ENCODE measurements at regions of chr7 and their contacts with region 1.

Region 1: DNA sequence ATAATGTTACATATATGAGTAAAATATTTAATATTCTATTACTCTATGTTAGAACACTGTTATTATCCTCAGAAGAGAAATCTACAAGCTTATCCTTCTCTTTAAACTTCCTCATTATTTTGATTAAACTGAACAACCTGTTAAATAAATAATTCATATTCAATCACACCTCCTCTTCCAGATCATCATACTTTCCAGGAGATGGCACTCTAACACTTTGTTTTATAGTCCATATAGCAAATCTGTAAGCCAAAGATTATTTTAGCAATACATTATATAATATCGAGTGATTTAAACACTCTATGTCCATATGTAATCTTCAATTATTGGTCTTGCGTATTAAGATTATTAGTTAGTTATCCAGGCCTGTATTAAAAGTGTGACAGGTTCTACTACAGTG is 694.1 kb downstream of the ANKRD7 start:
- DNase-seq: peak; percentile 5
- ATAC-seq: no peak
- H3K4me3 ChIP-seq: no peak overlapping the region
- H3K27ac ChIP-seq: no peak overlapping the region
- H3K4me1 ChIP-seq: no peaks in the 10 kb centered on the region
- H3K27me3 ChIP-seq: no peaks in the 10 kb centered on the region
- CTCF ChIP-seq: peak; percentile 46
- POLR2A ChIP-seq: no peak
- RAD21 ChIP-seq: 0 out of 2 replicates have a peak, but pooled peaks have one; percentile 14

Region 2: DNA sequence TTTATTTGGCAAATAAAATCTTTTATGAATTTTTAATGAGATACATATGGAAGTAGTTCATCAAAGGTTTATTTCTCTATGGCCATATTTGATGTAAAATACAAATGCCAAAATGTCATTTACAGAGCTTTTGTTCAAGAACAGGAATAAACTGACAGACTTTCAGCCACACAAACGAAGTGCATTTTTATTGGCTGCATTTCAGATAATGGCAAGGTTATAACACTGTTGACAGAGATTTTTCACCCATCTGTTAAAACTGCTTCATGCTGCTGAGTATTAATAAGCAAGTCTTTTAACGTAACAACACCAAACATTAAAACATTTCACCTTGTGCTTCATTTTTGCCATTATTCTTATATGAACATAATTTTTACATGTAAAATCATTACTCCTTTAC is 439.6 kb before region 1 on chr7:
- CTCF ChIA-PET with region 1: no interaction called
- POLR2A ChIA-PET with region 1: no interaction called
- dilution Hi-C with region 1: no loop called
- in situ Hi-C with region 1: no loop called
- intact Hi-C with region 1: no loop called
- DNase-seq: no peak
- ATAC-seq: no peak
- H3K4me3 ChIP-seq: no peak overlapping the region
- H3K27ac ChIP-seq: no peak overlapping the region
- H3K4me1 ChIP-seq: no peaks in the 10 kb centered on the region
- H3K27me3 ChIP-seq: no peaks in the 10 kb centered on the region
- CTCF ChIP-seq: no peak
- POLR2A ChIP-seq: no peak
- RAD21 ChIP-seq: no peak

Region 3: DNA sequence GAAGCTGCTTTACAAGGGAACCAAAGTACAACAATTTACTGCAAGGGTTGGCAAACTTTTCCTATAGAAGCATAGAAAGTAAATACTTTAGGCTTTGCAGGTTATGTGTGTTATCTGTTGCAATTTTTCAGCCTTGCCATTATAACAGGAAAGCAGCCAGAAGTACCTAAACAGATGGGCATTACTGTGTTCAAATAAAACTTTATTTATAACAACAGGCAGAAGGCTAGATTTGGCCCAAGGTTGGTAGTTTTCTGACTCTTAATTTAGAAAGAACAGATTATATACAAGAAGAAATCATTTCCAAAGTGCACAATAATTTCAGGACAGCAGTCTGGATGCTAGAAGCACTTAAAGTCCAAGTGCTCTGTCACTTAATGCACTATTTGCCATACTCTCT is 387.0 kb before region 1 on chr7:
- CTCF ChIA-PET with region 1: no interaction called
- POLR2A ChIA-PET with region 1: no interaction called
- dilution Hi-C with region 1: no loop called
- in situ Hi-C with region 1: no loop called
- intact Hi-C with region 1: no loop called
- DNase-seq: no peak
- ATAC-seq: no peak
- H3K4me3 ChIP-seq: no peak overlapping the region
- H3K27ac ChIP-seq: no peak overlapping the region
- H3K4me1 ChIP-seq: no peaks in the 10 kb centered on the region
- H3K27me3 ChIP-seq: no peaks in the 10 kb centered on the region
- CTCF ChIP-seq: no peak
- POLR2A ChIP-seq: no peak
- RAD21 ChIP-seq: no peak

Region 4: GRCh38 chr7:119175911-119176627 is 257.5 kb after region 1 on chr7:
- CTCF ChIA-PET with region 1: interaction called, 7 read pairs
- POLR2A ChIA-PET with region 1: no interaction called
- dilution Hi-C with region 1: no loop called
- in situ Hi-C with region 1: no loop called
- intact Hi-C with region 1: loop called (anchors 1 kb)
- DNase-seq: peak; percentile 42
- ATAC-seq: no peak
- H3K4me3 ChIP-seq: no peak overlapping the region
- H3K27ac ChIP-seq: no peak overlapping the region
- H3K4me1 ChIP-seq: no peaks in the 10 kb centered on the region
- H3K27me3 ChIP-seq: no peaks in the 10 kb centered on the region
- CTCF ChIP-seq: peak; percentile 52
- POLR2A ChIP-seq: no peak
- RAD21 ChIP-seq: peak; percentile 43; the same call in 1 of the 2 replicates

Region 5: DNA sequence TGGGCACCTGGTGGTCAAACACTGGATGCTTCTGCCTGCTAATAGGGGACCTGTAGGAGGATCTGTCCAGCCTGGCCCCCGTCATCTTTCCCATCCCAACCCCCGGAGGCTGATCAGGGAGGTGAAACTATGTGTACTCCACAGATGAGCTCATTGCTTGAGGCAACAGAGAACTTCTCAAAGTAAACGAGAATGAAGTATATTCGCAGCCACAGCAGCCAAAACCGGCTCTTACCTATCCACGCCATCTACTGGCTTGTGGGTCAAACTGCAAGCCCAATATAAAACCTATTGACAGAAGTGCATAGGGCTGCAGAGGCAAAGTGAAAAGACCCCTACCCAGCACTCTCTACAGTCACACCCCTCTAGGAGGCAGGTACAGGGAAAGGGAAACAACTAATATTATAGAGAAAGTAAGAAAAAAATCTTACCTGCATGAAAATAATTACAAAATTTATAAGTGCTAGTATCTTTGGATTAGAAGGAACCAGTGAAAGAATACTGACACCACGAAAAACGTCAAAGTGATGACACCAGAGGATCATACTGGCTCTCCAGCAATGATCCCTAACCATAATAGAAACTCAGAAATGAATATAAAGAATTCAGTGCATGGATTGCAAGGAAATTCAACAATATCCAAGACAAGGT is 279.4 kb after region 1 on chr7:
- CTCF ChIA-PET with region 1: no interaction called
- POLR2A ChIA-PET with region 1: no interaction called
- dilution Hi-C with region 1: no loop called
- in situ Hi-C with region 1: no loop called
- intact Hi-C with region 1: loop called (anchors 1 kb)
- DNase-seq: peak; percentile 31
- ATAC-seq: peak; percentile 59
- H3K4me3 ChIP-seq: no peak overlapping the region
- H3K27ac ChIP-seq: no peak overlapping the region
- H3K4me1 ChIP-seq: no peaks in the 10 kb centered on the region
- H3K27me3 ChIP-seq: no peaks in the 10 kb centered on the region
- CTCF ChIP-seq: peak; percentile 53
- POLR2A ChIP-seq: no peak
- RAD21 ChIP-seq: peak; percentile 23; the same call in 1 of the 2 replicates

Region 6: GRCh38 chr7:120554960-120555571 is 1636.5 kb after region 1 on chr7:
- CTCF ChIA-PET with region 1: no interaction called
- POLR2A ChIA-PET with region 1: no interaction called
- dilution Hi-C with region 1: no loop called
- in situ Hi-C with region 1: no loop called
- intact Hi-C with region 1: loop called (anchors 10 kb)
- DNase-seq: peak; percentile 47
- ATAC-seq: peak; percentile 86
- H3K4me3 ChIP-seq: no peak overlapping the region
- H3K27ac ChIP-seq: no peak overlapping the region
- H3K4me1 ChIP-seq: no peaks in the 10 kb centered on the region
- H3K27me3 ChIP-seq: no peaks in the 10 kb centered on the region; the same call in 1 of the 2 replicates
- CTCF ChIP-seq: peak; percentile 71
- POLR2A ChIP-seq: no peak
- RAD21 ChIP-seq: peak; percentile 75

Measured in IMR-90 (cell line).